ENCODE measurements at regions of chr6 and their contacts with region 1.

Region 1: GRCh38 chr6:32195652-32195901 is 3.1 kb upstream of the GPSM3 start:
- DNase-seq: peak; percentile 99
- ATAC-seq: no peak
- H3K4me3 ChIP-seq: peak overlapping the region in 2 of 3 experiments; percentile 94 to 96; a peak in 4 of 6 replicates
- H3K27ac ChIP-seq: peak overlapping the region; percentile 98
- H3K4me1 ChIP-seq: peaks cover 67% of the 10 kb centered on the region
- H3K27me3 ChIP-seq: no peaks in the 10 kb centered on the region; a peak in 1 of 5 replicates
- CTCF ChIP-seq: peak; percentile 69
- EP300 ChIP-seq: peak; percentile 32 to 60; a peak in 1 of 4 replicates
- POLR2A ChIP-seq: no peak
- RAD21 ChIP-seq: peak; percentile 29; the same call in 1 of the 2 replicates

Region 2: DNA sequence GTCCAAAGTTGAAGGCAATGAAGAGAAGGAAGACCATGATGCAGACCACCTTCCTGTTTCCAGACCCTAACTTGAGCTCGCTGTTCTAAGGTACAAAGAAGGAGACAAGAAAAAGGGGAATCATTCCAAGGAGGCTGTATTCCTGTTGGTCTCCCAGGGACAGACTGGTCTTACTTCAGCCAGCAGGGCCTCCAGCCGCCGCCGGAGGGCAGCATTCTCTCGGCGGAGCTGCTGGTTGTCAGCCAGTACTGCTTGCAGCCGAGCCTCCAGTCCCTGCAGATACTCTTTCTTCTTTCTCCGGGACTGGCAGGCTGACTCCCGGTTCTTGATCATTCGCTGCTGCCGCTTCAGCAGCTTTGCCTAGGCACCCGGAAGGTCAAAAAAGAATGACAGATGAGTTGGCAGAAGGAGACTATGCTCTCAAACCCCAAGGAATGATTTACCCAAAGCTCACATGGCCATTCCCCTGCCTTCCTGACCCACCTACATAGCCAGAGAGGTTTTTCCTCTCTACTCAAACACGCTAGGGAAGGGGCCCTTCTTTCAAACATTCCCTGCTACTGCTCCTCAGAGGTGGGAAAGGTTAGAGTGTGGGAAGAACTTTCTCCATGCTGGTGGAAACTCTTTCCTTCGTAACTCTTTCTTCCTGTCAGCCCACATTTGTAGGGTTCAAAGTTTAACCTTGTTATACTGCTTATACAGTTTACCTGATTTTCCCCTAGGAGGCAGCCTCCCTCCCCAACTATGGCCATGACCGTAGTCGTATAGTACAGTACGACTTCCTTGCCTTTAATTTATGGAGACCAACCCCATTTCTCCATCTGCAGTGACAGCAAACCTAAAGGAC is 76.6 kb before region 1 on chr6:
- CTCF ChIA-PET with region 1: interaction called, 11 read pairs
- POLR2A ChIA-PET with region 1: interaction called, 9 read pairs
- in situ Hi-C with region 1: no loop called
- intact Hi-C with region 1: loop called (anchors 5 kb)
- DNase-seq: peak; percentile 84
- ATAC-seq: peak; percentile 93
- H3K4me3 ChIP-seq: peak overlapping the region; percentile 45 to 59 (median 56); a peak in 5 of 6 replicates
- H3K27ac ChIP-seq: peak overlapping the region; percentile 87
- H3K4me1 ChIP-seq: peaks cover 24% of the 10 kb centered on the region
- H3K27me3 ChIP-seq: no peaks in the 10 kb centered on the region
- CTCF ChIP-seq: peak; percentile 95
- EP300 ChIP-seq: no peak
- POLR2A ChIP-seq: peak in 1 of 2 experiments; percentile 63; a peak in 3 of 4 replicates
- RAD21 ChIP-seq: peak; percentile 97

Region 3: DNA sequence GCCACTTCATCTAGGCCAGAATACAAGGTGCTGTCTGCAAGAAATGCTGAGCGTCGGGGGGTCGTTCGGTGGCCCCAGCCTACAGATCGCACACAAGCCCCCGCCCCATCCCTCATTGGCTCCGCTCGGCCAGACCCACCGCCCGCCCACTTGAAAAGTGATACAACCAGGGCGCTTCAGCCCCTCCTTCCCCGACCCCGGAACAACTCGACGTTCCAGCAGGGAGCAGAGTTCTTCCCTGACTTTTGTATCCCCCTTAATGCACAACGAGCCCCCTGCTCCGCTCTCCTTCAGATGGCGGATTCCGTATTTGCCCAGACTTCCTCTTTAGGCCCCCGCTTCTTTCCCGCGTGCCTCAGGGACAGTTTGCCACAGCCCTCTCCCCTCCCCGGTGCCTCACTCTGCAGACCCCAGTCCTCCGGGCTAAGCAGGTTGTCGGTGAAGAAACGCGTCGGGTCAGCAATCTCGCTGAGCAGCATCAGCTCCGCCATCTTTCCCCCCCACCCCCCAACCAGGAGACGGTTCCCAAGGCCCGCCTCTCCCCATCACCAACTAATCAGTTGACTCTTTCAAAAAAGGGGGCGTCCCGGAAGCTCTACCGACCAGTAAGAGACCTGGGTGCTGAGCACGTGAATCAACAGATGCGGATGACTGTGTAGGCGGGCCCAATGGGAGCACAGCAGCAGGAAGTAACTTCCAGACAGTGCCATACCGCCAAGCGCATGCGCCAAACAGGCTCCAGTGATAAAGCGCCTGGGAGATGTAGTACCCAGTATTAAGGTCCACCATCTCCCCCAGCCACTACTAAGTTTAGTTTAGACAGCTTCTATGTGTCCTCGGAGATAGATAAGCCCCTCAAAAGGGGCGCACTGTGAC is 67.6 kb before region 1 on chr6 and contains the start of gene ATF6B:
- CTCF ChIA-PET with region 1: no interaction called
- POLR2A ChIA-PET with region 1: interaction called, 19 read pairs
- in situ Hi-C with region 1: no loop called
- intact Hi-C with region 1: no loop called
- DNase-seq: peak; percentile 100
- ATAC-seq: peak; percentile 93
- H3K4me3 ChIP-seq: peak within 1 kb of the TSS; percentile 95 to 100 (median 99)
- H3K27ac ChIP-seq: peak within 1 kb of the TSS; percentile 81
- H3K4me1 ChIP-seq: peaks cover 33% of the 10 kb centered on the region
- H3K27me3 ChIP-seq: no peaks in the 10 kb centered on the region; a peak in 2 of 5 replicates
- CTCF ChIP-seq: 0 out of 2 replicates have a peak, but pooled peaks have one; percentile 17
- EP300 ChIP-seq: no peak
- POLR2A ChIP-seq: peak; percentile 68 to 69
- RAD21 ChIP-seq: no peak
- total RNA-seq, gene ATF6B: 7.5 and 18.1 TPM in 2 replicates

Region 4: DNA sequence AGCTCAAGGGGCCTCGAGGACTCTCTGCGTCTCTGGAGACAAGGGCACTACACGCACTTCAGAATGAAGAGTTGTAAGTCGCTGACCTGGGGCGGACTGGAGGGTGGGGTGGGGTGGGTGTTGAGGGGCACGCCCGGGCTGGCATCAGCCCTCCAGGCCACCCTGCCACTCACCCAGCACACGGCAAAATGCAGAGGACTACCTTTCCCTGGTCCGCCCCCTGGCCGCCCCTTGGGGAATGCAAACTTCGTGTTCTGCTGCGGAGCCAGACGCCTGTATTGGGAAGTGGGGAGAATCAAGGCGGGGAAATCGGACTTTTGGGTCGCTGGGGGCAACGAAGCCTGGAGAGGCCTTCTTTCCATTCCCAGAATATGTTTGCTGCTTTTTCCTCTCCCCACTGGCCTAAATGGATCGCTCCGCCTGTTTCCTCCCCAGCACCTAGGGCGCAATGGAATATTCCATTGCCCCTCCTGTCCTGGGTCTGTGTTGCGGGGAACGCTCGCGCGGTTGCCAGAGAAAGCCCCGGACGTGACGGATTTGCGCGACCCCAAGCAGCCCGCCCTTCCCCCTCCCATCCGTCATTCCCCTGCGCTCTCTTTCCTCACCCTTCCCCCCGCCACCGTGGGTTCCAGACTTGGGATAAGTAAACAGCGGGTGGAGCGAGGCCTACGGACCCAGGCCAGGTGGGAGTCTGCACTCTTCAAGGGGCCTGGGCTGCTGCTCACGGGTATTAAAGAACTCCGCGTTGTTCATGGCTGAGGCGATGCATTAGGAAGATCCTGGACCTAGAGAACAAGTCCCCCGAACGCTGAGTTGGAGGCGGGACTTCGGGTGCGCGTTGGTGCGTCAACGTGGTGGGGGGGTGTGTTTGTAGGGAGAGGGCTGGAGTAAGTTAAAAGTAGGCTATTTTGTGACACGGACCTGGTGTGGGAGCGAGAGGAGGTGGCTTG is 41.7 kb before region 1 on chr6 and contains the start of gene PPT2:
- CTCF ChIA-PET with region 1: interaction called, 4 read pairs
- POLR2A ChIA-PET with region 1: interaction called, 6 read pairs
- in situ Hi-C with region 1: no loop called
- intact Hi-C with region 1: loop called (anchors 1 kb)
- DNase-seq: peak; percentile 93
- ATAC-seq: peak; percentile 79
- H3K4me3 ChIP-seq: peak within 1 kb of the TSS; percentile 78 to 91 (median 88)
- H3K27ac ChIP-seq: peak within 1 kb of the TSS; percentile 88
- H3K4me1 ChIP-seq: peaks cover 28% of the 10 kb centered on the region
- H3K27me3 ChIP-seq: no peaks in the 10 kb centered on the region; a peak in 1 of 5 replicates
- CTCF ChIP-seq: peak; percentile 50
- EP300 ChIP-seq: peak; percentile 71 to 82
- POLR2A ChIP-seq: peak; percentile 68 to 74
- RAD21 ChIP-seq: peak; percentile 37
- total RNA-seq, gene PPT2: 20.1 and 39.2 TPM in 2 replicates

Region 5: GRCh38 chr6:32177788-32178546 is 17.6 kb before region 1 on chr6 and contains the start of gene RNF5:
- CTCF ChIA-PET with region 1: no interaction called
- POLR2A ChIA-PET with region 1: interaction called, 127 read pairs
- in situ Hi-C with region 1: no loop called
- intact Hi-C with region 1: loop called (anchors 1 kb)
- DNase-seq: peak; percentile 100
- ATAC-seq: peak; percentile 90
- H3K4me3 ChIP-seq: peak within 1 kb of the TSS; percentile 96 to 98 (median 98)
- H3K27ac ChIP-seq: peak within 1 kb of the TSS; percentile 97
- H3K4me1 ChIP-seq: peaks cover 54% of the 10 kb centered on the region
- H3K27me3 ChIP-seq: no peaks in the 10 kb centered on the region; a peak in 1 of 5 replicates
- CTCF ChIP-seq: no peak
- EP300 ChIP-seq: peak; percentile 10 to 17; a peak in 1 of 4 replicates
- POLR2A ChIP-seq: peak; percentile 1 to 14; a peak in 1 of 4 replicates
- RAD21 ChIP-seq: no peak
- total RNA-seq, gene RNF5: 98.0 and 107 TPM in 2 replicates

Region 6: GRCh38 chr6:32234934-32235333 is 39.4 kb after region 1 on chr6:
- CTCF ChIA-PET with region 1: no interaction called
- POLR2A ChIA-PET with region 1: no interaction called
- in situ Hi-C with region 1: no loop called
- intact Hi-C with region 1: loop called (anchors 5 kb)
- DNase-seq: no peak
- ATAC-seq: peak; percentile 27; the same call in 1 of the 3 replicates
- H3K4me3 ChIP-seq: no peak overlapping the region
- H3K27ac ChIP-seq: no peak overlapping the region
- H3K4me1 ChIP-seq: no peaks in the 10 kb centered on the region
- H3K27me3 ChIP-seq: peaks cover 0 to 3% of the 10 kb centered on the region in 2 experiments; a peak in 1 of 5 replicates
- CTCF ChIP-seq: peak; percentile 48
- EP300 ChIP-seq: no peak
- POLR2A ChIP-seq: no peak
- RAD21 ChIP-seq: no peak